ENCODE measurements at regions of chr10 and their contacts with region 1.

Region 1: GRCh38 chr10:31031558-31032257 is at the start of gene ZNF438:
- DNase-seq: peak; percentile 97
- H3K4me3 ChIP-seq: peak within 1 kb of the TSS; percentile 61
- H3K27ac ChIP-seq: peak within 1 kb of the TSS; percentile 100
- H3K4me1 ChIP-seq: peaks cover 53% of the 10 kb centered on the region
- H3K27me3 ChIP-seq: no peaks in the 10 kb centered on the region
- CTCF ChIP-seq: peak in 2 of 3 experiments; percentile 33 to 45
- POLR2A ChIP-seq: peak in 1 of 2 donors; percentile 53
- total RNA-seq, gene ZNF438: 11.8 TPM

Region 2: DNA sequence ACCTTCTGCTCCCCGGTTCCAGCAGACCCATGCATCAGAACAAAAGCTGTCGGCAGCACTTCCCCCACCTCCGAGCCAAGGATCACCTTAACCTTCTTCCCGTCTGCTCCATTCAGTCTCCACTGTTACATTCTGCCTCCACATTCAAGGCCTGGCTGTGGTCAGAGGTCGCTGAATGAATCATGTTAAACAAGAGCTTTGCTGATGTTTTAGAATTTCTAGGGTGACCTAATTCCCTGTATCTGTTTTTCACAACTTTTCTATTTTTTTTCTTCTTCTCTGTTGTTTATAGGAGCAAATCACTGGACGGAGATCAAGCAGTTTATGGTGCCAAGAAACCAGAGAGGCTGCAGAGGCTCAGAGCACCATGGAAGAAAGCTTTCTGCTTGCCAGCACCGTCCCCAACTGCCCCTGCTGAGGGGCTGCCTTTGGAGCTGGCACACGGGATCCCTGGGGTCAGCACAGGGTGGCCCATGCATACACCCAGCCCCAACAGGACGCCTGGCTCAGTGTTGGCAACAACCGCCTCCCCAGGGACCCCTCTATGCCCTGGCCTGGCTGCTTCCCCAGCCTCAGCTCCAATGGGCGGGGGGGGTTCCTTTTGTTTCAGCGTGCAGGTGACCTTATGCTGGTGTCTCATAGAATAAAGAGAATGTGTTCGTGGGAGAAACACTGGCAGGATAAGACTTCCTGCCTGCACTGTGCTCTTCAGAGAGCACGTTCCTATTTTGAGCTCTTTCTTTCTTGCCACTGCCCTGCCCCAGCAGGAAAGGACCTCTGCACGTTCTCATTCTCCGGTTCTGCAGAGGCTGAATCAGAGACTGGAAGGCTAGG is 219.5 kb before region 1 on chr10:
- intact Hi-C with region 1: loop called (anchors 5 kb)
- DNase-seq: peak in 1 of 2 donors; percentile 95
- H3K4me3 ChIP-seq: peak overlapping the region in 1 of 2 donors; percentile 22
- H3K27ac ChIP-seq: peak overlapping the region; percentile 85
- H3K4me1 ChIP-seq: peaks cover 79% of the 10 kb centered on the region
- H3K27me3 ChIP-seq: no peaks in the 10 kb centered on the region
- CTCF ChIP-seq: no peak
- POLR2A ChIP-seq: no peak

Region 3: GRCh38 chr10:30963992-30964930 is 67.4 kb before region 1 on chr10:
- intact Hi-C with region 1: no loop called
- DNase-seq: no peak
- H3K4me3 ChIP-seq: no peak overlapping the region
- H3K27ac ChIP-seq: no peak overlapping the region
- H3K4me1 ChIP-seq: no peaks in the 10 kb centered on the region
- H3K27me3 ChIP-seq: no peaks in the 10 kb centered on the region
- CTCF ChIP-seq: no peak
- POLR2A ChIP-seq: no peak

Region 4: DNA sequence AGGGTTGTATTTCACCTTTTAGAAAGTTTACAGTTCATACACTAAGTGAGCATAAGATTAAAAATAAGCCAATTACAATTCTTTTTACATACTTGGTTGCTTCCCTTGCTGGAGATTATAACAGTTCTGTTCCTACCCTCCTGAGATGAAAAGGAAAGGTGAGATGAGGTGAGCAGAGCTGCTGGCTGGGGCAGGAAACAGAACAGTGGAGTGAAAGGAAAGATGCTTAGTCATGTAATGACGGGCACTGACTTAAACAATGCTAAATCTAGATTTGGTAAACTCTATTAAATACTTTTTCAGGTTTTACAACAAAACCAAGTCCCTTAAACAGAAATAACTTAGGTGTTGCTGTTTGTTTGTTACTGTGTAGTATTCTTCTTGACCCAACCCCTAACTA is 267.4 kb after region 1 on chr10:
- intact Hi-C with region 1: no loop called
- DNase-seq: no peak
- H3K4me3 ChIP-seq: no peak overlapping the region
- H3K27ac ChIP-seq: no peak overlapping the region
- H3K4me1 ChIP-seq: no peaks in the 10 kb centered on the region
- H3K27me3 ChIP-seq: no peaks in the 10 kb centered on the region
- CTCF ChIP-seq: no peak
- POLR2A ChIP-seq: no peak

Measured in vagina (tissue), 2 donors.